Naive thymus-derived CD8-positive, alpha-beta T cell (primary cell): ENCODE measurements at regions of chr6 and their contacts with region 1.

Region 1: DNA sequence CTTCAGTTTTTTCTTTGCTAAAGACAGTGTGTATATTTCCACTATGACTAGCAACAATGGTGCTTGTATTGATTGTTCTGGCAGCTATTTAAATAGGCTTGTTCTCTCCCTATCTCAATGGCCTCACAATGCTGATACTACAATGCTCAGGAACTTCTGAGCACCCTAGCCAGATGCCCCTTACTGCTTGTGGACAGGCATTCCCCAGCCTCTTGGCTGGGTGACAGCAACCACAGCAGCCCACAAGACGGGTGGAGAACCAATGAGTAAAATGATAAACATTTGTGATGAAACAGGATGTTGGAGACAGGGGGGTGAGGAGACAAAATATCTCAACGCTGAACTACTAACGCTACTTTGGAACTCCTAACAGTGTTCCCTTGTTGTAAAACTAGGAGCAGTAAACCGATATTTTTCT is 42.3 kb downstream of the HIVEP2 start:
- DNase-seq: peak; percentile 60 to 91 (median 84)
- ATAC-seq: peak; percentile 59 to 66
- H3K4me3 Mint-ChIP-seq: peak overlapping the region in 8 of 10 donors; percentile 59 to 84 (median 82)
- H3K27ac Mint-ChIP-seq: peak overlapping the region in 2 of 10 donors; percentile 95 to 98
- H3K4me1 Mint-ChIP-seq: peaks cover 26 to 69% (median 53%) of the 10 kb centered on the region in 4 donors
- H3K27me3 Mint-ChIP-seq: no peaks in the 10 kb centered on the region

Region 2: DNA sequence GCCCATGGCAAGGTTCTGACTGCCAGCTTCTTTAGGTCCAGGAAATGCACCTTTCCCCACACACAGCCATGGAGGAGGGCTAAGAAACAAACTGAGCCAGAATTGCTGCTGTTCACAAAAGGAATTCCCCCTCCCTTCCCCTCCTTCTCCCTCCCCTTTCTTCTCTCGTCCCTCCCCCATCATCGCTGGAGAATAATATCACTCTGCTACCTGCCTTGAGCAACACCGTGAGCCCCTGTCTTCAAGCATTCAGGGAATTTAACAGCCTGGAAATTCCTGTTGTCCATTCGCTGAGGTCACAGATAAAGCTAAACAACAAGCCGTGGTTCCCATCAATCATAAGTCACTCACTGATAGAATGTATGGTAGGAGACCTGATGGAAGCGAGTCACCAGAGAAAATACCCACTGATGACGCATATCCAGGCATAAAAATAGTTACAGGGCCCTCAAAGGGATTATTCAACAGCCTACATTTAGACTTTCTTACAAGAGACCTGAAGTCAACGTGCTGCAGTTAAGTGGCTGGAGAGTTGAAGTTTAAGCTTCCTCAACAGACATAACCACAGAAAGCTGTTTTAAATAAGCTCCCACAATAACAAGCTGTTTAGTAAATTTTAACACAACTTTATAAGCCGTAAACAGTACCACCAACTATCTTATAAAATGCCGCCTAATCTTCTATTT is 17.3 kb before region 1 on chr6:
- POLR2A ChIA-PET with region 1: interaction called, 12 read pairs
- DNase-seq: peak; percentile 21 to 85 (median 72)
- ATAC-seq: peak; percentile 86 to 90
- H3K4me3 Mint-ChIP-seq: peak overlapping the region; percentile 78 to 99 (median 97)
- H3K27ac Mint-ChIP-seq: peak overlapping the region; percentile 89 to 100 (median 100)
- H3K4me1 Mint-ChIP-seq: peaks cover 37 to 96% (median 88%) of the 10 kb centered on the region in 4 donors
- H3K27me3 Mint-ChIP-seq: no peaks in the 10 kb centered on the region

Region 3: DNA sequence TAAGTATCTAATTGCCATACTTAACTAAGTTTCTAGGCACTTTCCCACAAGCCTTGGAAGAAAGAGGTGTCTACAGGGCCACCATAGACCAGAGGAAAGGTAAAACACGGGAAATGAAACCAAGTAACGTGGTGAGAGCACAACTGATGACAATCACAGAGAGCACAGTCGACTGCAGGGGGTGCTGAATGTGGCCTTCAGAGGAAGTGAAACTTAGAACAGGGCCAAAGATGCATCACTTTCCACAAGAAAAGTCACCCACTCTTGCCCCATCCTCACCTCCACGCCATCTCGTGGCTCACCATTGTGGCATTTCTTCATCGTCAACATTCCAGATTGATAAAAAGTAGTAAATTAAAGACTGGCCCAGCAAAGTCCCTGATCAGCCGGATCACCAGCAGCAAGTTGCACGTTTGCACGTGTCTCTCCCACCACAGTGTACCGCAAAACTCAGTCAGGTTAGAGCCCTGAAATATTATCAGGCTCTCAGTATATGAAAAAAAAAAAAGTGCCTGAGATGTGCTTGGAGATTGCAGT is 10.9 kb after region 1 on chr6:
- POLR2A ChIA-PET with region 1: interaction called, 19 read pairs
- DNase-seq: peak; percentile 24 to 85 (median 72)
- ATAC-seq: peak; percentile 84 to 93
- H3K4me3 Mint-ChIP-seq: peak overlapping the region; percentile 74 to 93 (median 88)
- H3K27ac Mint-ChIP-seq: peak overlapping the region in 9 of 10 donors; percentile 96 to 100 (median 99)
- H3K4me1 Mint-ChIP-seq: peaks cover 36 to 84% (median 75%) of the 10 kb centered on the region in 4 donors
- H3K27me3 Mint-ChIP-seq: no peaks in the 10 kb centered on the region